Upper lobe of right lung (tissue), 1 donor: ENCODE measurements at regions of chr11 and their contacts with region 1.

Region 1: DNA sequence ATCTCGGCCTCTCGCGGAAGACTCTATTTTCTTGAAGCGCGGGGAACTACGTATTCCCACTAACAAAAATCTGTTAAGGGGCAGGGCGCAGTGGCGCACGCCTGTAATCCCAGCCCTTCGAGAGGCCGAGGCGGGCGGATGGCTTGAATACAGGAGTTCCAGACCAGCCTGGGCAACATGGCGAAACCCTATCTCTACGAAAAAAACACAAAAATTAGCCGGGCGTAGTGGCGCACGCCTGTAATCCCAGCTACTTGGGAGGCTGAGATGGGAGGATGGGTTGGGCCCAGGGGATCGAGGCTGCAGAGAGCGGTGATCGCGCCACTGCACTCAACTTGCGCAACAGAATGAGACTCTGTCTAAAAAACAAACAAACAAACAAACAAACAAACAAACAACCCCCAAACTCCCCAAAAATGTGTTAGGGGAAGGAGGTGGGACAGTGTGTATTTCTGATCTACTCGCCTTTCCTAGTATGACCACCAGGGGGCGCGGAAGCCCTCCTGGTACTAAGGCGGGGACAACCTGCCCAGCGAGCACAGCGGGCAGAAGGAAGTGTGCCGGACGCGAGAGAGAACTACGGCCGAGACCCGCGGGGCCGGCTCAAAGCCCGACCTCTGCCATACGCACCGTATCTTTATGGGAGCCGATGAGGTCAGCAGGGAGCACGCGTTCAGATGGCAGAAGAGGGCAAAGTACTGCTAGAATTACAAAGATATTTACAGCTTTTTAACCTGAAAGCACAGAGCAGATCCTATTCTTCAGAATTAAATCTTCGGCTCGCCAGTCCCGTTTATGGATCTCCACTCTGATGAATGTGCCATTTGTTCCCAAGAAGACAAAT is 1.3 kb upstream of the STX3 start:
- DNase-seq: peak; percentile 91
- ATAC-seq: peak; percentile 81
- H3K4me3 ChIP-seq: peak overlapping the region; percentile 95
- H3K27ac ChIP-seq: peak overlapping the region; percentile 95
- H3K4me1 ChIP-seq: peaks cover 20% of the 10 kb centered on the region
- H3K27me3 ChIP-seq: no peaks in the 10 kb centered on the region
- CTCF ChIP-seq: peak; percentile 97

Region 2: GRCh38 chr11:59802639-59803176 is 48.8 kb after region 1 on chr11:
- intact Hi-C with region 1: loop called (anchors 5 kb)
- DNase-seq: no peak
- ATAC-seq: peak; percentile 76
- H3K4me3 ChIP-seq: no peak overlapping the region
- H3K27ac ChIP-seq: peak overlapping the region; percentile 15
- H3K4me1 ChIP-seq: no peaks in the 10 kb centered on the region
- H3K27me3 ChIP-seq: no peaks in the 10 kb centered on the region
- CTCF ChIP-seq: peak; percentile 65

Region 3: DNA sequence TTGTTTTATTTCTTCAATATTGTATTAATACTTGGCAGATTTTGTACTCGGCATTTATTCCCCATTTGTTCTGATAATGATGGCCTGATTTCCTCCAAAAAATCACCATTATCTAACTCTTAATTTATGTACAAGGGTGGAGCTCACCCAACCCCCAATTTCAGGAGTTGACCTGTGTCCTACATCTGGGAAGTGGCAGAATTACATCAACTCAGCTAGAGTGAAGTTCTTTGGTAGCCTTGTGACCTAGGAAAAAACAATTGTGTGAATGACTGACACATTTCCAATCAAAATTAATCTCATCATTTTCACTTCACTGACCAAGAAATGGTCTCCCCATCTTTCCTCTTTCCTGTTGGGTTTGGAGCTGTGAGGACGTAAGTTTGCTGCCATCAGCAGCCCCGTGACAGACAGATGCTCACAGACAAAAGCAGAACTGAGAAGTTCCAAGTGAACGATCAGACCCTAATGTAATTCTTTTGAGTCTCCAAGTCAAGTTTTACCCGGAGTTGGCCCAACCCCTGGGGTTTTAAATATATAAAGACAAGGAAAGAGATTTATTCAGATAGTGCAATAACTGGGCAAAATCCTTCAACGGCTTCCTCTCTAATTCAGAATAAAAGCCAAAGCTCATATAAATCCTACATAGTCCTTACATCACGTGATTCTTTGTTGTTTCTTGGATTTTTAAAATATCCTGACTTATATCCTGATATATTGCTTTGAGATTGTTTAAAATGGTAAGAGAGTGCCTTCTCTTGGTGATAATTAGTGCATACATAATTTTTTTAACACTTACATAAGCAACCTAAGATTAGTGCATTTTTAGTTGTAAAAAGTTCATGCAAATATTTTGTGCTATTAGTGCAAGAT is 556.8 kb after region 1 on chr11:
- intact Hi-C with region 1: no loop called
- DNase-seq: no peak
- ATAC-seq: peak; percentile 81
- H3K4me3 ChIP-seq: no peak overlapping the region
- H3K27ac ChIP-seq: no peak overlapping the region
- H3K4me1 ChIP-seq: no peaks in the 10 kb centered on the region
- H3K27me3 ChIP-seq: no peaks in the 10 kb centered on the region
- CTCF ChIP-seq: no peak